ENCODE measurements at regions of chr6 and their contacts with region 1.

Region 1: GRCh38 chr6:27772261-27773001 is 139.8 kb downstream of the OR2B2 start:
- DNase-seq: peak; percentile 94
- H3K4me3 Mint-ChIP-seq: no peak overlapping the region
- H3K27ac Mint-ChIP-seq: peak overlapping the region; percentile 21
- H3K4me1 Mint-ChIP-seq: peaks cover 25% of the 10 kb centered on the region
- H3K27me3 Mint-ChIP-seq: no peaks in the 10 kb centered on the region
- CTCF ChIP-seq: peak; percentile 95

Region 2: GRCh38 chr6:27700337-27700736 is 72.1 kb before region 1 on chr6:
- CTCF ChIA-PET with region 1: no interaction called
- intact Hi-C with region 1: no loop called
- DNase-seq: no peak
- H3K4me3 Mint-ChIP-seq: no peak overlapping the region
- H3K27ac Mint-ChIP-seq: no peak overlapping the region
- H3K4me1 Mint-ChIP-seq: no peaks in the 10 kb centered on the region
- H3K27me3 Mint-ChIP-seq: no peaks in the 10 kb centered on the region
- CTCF ChIP-seq: no peak

Region 3: DNA sequence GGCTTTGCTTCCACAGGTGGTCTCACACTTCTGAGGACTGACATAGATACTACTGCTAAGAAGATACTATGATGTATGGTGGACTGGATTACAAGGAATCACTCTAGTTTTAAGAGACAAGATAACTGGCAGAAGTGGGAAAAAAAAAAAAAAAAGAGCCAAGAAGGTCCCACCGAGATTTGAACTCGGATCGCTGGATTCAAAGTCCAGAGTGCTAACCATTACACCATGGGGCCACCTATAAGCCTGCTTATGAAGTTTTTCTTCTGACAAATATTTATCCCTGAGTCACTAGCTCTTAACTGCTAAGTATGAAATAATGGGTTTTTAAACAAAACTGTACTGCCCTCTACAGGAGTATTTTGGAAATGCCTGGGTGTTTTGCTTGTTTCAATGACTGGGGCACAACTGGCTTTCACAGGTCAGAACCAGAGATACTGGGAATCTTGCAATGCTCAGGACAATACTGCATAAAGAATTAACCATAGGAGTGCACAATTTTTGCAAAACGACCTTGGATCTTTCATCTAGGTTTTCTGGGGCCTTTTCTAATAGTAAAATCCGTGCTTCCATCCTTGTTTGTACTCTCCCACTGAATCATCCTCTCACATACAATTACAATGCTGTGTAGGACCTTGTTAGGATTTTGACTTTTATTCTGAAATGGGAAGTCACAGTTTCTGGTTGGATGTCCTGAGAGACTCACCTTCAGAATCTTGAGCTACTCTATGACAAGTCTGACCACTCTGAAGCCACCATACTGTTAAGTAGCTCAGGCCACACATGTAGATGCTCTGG is 23.5 kb after region 1 on chr6:
- CTCF ChIA-PET with region 1: interaction called, 23 read pairs
- intact Hi-C with region 1: no loop called
- DNase-seq: peak; percentile 86
- H3K4me3 Mint-ChIP-seq: peak overlapping the region; percentile 36
- H3K27ac Mint-ChIP-seq: peak overlapping the region; percentile 96
- H3K4me1 Mint-ChIP-seq: peaks cover 25% of the 10 kb centered on the region
- H3K27me3 Mint-ChIP-seq: no peaks in the 10 kb centered on the region
- CTCF ChIP-seq: peak; percentile 66